ENCODE measurements at regions of chr7 and their contacts with region 1.

Region 1: GRCh38 chr7:6706677-6707544 is at the start of gene ZNF12:
- DNase-seq: peak; percentile 94
- H3K4me3 ChIP-seq: peak within 1 kb of the TSS; percentile 85 to 97
- H3K27ac ChIP-seq: peak within 1 kb of the TSS; percentile 69 to 75
- H3K4me1 ChIP-seq: peaks cover 5% of the 10 kb centered on the region
- H3K27me3 ChIP-seq: no peaks in the 10 kb centered on the region
- CTCF ChIP-seq: peak in 2 of 4 experiments; percentile 10 to 26
- POLR2A ChIP-seq: peak; percentile 70
- total RNA-seq, gene ZNF12: 22.1 to 24.1 TPM

Region 2: DNA sequence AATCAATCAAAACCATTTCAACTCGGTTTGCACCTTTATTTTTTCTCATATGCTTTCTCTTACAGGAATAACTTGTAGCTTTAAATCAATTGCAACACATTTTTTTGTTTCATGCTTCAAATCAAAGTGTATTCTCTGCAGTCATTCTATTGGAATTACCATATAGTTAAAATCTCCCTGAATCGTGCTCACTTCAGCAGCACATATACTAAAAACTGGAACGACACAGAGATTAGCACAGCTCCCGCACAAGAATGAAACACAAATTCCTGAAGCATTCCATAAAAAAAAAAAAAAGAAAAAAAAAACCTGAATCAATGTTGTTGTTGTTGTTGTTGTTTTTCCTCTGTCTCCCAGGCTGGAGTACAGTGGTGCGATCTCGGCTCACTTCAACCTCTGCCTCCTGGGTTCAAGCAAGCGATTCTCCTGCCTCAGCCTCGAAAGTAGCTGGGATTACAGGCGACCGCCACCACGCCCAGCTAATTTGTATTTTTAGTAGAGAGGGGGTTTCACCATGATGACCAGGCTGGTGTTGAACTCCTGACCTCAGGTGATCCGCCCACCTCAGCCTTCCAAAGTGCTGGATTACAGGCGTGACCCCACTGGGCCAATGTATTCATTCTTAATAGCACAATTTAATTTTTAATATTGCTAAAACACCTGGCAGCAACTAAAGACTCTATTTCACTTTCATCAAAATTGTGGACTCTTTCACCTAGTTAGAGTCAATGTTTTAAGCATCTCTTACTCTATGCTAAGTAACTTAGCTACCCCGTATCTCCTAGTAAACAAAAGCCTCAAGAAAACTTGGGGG is 649.4 kb before region 1 on chr7:
- intact Hi-C with region 1: no loop called
- DNase-seq: no peak
- H3K4me3 ChIP-seq: peak overlapping the region; percentile 88 to 99
- H3K27ac ChIP-seq: peak overlapping the region in 1 of 2 donors; percentile 91
- H3K4me1 ChIP-seq: no peaks in the 10 kb centered on the region
- H3K27me3 ChIP-seq: no peaks in the 10 kb centered on the region
- CTCF ChIP-seq: no peak
- POLR2A ChIP-seq: no peak

Region 3: GRCh38 chr7:6637544-6638229 is 69.2 kb before region 1 on chr7:
- intact Hi-C with region 1: loop called (anchors 5 kb)
- DNase-seq: no peak
- H3K4me3 ChIP-seq: peak overlapping the region; percentile 86 to 97
- H3K27ac ChIP-seq: peak overlapping the region in 1 of 2 donors; percentile 39
- H3K4me1 ChIP-seq: peaks cover 6% of the 10 kb centered on the region
- H3K27me3 ChIP-seq: no peaks in the 10 kb centered on the region
- CTCF ChIP-seq: peak in 1 of 4 experiments; percentile 45
- POLR2A ChIP-seq: no peak

Region 4: DNA sequence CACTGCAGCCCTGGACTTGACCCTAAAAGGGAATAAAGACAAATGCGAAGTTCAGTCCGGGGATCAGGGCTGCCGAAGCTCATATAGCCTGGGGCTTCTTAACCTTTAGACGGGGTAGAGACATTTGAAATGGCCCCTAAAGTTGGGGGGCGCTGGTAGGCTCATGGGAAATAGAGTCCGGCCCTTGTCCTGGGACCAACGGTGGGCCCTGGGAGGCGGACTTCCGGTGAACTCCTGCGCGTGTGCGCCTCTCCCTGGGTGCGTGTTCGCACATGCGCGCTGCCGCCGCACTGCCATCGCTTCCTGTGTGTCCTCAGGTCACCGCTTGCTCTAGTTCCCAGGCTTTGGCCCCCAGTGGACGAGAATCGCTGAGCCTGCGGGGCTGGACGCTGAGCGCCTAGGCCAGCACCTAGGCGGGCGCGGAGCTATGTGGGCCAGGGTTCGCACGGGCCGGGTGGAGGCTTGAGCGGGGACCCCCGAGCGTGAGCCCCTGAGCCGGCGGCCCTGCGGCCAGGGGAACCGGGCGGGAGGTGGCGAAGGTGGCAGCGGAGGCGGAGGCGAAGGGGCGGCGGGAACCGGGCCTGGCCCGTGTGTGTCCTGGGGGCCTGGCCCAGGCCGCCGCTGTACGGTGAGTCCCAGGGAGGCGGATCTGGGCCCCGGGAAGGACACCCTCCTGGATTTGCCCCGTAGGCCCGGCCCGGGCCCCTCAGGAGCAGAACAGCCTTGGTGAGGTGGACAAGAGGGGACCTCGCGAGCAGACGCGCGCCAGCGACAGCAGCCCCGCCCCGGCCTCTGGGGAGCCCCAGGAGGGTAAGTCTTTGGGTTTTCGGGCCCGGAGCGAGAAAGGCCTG is 22.8 kb after region 1 on chr7:
- intact Hi-C with region 1: loop called (anchors 2 kb)
- DNase-seq: peak; percentile 86
- H3K4me3 ChIP-seq: peak overlapping the region; percentile 72 to 82
- H3K27ac ChIP-seq: peak overlapping the region; percentile 63 to 74
- H3K4me1 ChIP-seq: no peaks in the 10 kb centered on the region
- H3K27me3 ChIP-seq: no peaks in the 10 kb centered on the region
- CTCF ChIP-seq: peak in 1 of 4 experiments; percentile 37
- POLR2A ChIP-seq: peak; percentile 56

Region 5: DNA sequence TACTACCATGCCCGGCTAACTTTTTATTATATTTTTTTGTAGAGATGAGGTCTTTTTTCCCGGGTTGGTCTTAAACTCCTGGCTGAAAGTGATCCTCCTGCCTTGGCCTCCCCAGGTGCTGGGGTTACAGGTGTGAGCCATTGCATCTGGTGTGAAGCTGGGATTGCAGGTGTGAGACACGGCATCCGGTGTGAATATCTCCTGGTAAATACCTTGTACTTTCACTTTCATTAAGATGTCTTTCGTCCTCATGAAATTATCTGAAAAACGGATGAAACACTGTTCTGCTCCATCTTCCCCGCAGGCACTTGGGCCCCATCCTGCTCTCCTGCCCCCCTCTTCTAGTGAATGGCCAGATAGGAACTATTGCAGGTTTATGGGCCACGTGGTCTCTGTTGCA is 179.3 kb after region 1 on chr7:
- intact Hi-C with region 1: no loop called
- DNase-seq: no peak
- H3K4me3 ChIP-seq: no peak overlapping the region
- H3K27ac ChIP-seq: no peak overlapping the region
- H3K4me1 ChIP-seq: no peaks in the 10 kb centered on the region
- H3K27me3 ChIP-seq: no peaks in the 10 kb centered on the region
- CTCF ChIP-seq: no peak
- POLR2A ChIP-seq: no peak

Region 6: DNA sequence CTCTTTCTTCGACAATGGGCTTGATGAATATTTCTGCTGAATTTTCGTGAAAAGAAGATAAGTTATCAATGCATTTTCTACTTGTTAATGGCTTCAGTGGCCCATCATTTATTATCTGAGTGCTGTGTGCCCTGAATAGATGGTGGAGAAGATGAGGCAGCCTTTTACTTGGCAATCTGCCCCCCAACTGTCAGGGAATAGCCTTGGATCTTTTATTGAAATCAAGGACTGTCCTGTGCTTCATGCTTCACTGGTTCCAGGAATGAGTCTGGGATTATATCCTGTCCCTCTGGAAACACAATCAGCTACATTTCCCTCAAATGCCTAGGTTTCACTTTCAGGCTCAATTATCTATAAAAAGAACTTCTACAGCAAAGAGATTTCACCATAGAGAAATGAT is 1650.6 kb after region 1 on chr7:
- intact Hi-C with region 1: no loop called
- DNase-seq: no peak
- H3K4me3 ChIP-seq: no peak overlapping the region
- H3K27ac ChIP-seq: no peak overlapping the region
- H3K4me1 ChIP-seq: no peaks in the 10 kb centered on the region
- H3K27me3 ChIP-seq: no peaks in the 10 kb centered on the region
- CTCF ChIP-seq: no peak
- POLR2A ChIP-seq: no peak

Measured in prostate gland (tissue), 2 donors.